Endothelial cell of umbilical vein (primary cell): ENCODE measurements at regions of chr6 and their contacts with region 1.

Region 1: GRCh38 chr6:112372226-112372806 is 25.2 kb downstream of the RFPL4B start:
- DNase-seq: peak; percentile 49
- H3K4me3 ChIP-seq: no peak overlapping the region
- H3K27ac ChIP-seq: no peak overlapping the region
- H3K4me1 ChIP-seq: no peaks in the 10 kb centered on the region
- H3K27me3 ChIP-seq: peaks cover 22 to 23% of the 10 kb centered on the region in 2 experiments
- CTCF ChIP-seq: peak; percentile 32 to 36
- POLR2A ChIP-seq: no peak

Region 2: GRCh38 chr6:112337209-112337638 is 35.1 kb before region 1 on chr6:
- CTCF ChIA-PET with region 1: interaction called, 9 read pairs
- POLR2A ChIA-PET with region 1: no interaction called
- dilution Hi-C with region 1: no loop called
- intact Hi-C with region 1: loop called (anchors 1 kb)
- DNase-seq: peak; percentile 89
- H3K4me3 ChIP-seq: no peak overlapping the region
- H3K27ac ChIP-seq: no peak overlapping the region
- H3K4me1 ChIP-seq: peaks cover 8% of the 10 kb centered on the region
- H3K27me3 ChIP-seq: no peaks in the 10 kb centered on the region
- CTCF ChIP-seq: peak; percentile 75 to 85
- POLR2A ChIP-seq: peak; percentile 62